ENCODE measurements at regions of chr17 and their contacts with region 1.

Region 1: GRCh38 chr17:44141717-44142285 is at the start of gene HROB:
- DNase-seq: peak; percentile 76 to 98
- H3K4me3 ChIP-seq: peak within 1 kb of the TSS; percentile 50 to 76
- H3K27ac ChIP-seq: no peak within 1 kb of the TSS
- H3K4me1 ChIP-seq: peaks cover 0 to 10% of the 10 kb centered on the region in 2 donors
- H3K27me3 ChIP-seq: no peaks in the 10 kb centered on the region
- CTCF ChIP-seq: peak; percentile 90 to 95 (median 93)
- total RNA-seq, gene HROB: not detected

Region 2: GRCh38 chr17:43907425-43907981 is 234.3 kb before region 1 on chr17 and contains the start of gene MPP2:
- intact Hi-C with region 1: loop called (anchors 1 kb)
- DNase-seq: peak in 1 of 2 donors; percentile 87
- H3K4me3 ChIP-seq: peak within 1 kb of the TSS; percentile 75 to 81
- H3K27ac ChIP-seq: peak within 1 kb of the TSS; percentile 89 to 96
- H3K4me1 ChIP-seq: peaks cover 4 to 11% of the 10 kb centered on the region in 2 donors
- H3K27me3 ChIP-seq: no peaks in the 10 kb centered on the region
- CTCF ChIP-seq: peak in 1 of 3 experiments; percentile 31
- total RNA-seq, gene MPP2: 16.7 TPM

Region 3: GRCh38 chr17:43983515-43984411 is 158.0 kb before region 1 on chr17:
- intact Hi-C with region 1: no loop called
- DNase-seq: no peak
- H3K4me3 ChIP-seq: peak overlapping the region; percentile 50 to 51
- H3K27ac ChIP-seq: no peak overlapping the region
- H3K4me1 ChIP-seq: peaks cover 6 to 7% of the 10 kb centered on the region in 2 donors
- H3K27me3 ChIP-seq: peaks cover 14% of the 10 kb centered on the region
- CTCF ChIP-seq: no peak

Region 4: GRCh38 chr17:44070455-44071197 is 71.2 kb before region 1 on chr17 and contains the start of gene G6PC3:
- intact Hi-C with region 1: loop called (anchors 2 kb)
- DNase-seq: peak; percentile 83 to 98
- H3K4me3 ChIP-seq: peak within 1 kb of the TSS; percentile 66 to 68
- H3K27ac ChIP-seq: peak within 1 kb of the TSS; percentile 84 to 89
- H3K4me1 ChIP-seq: peaks cover 5 to 35% of the 10 kb centered on the region in 2 donors
- H3K27me3 ChIP-seq: no peaks in the 10 kb centered on the region
- CTCF ChIP-seq: peak in 1 of 3 experiments; percentile 14
- total RNA-seq, gene G6PC3: 111 TPM

Region 5: GRCh38 chr17:44110823-44111633 is 30.8 kb before region 1 on chr17:
- intact Hi-C with region 1: loop called (anchors 2 kb)
- DNase-seq: peak; percentile 92 to 99
- H3K4me3 ChIP-seq: peak overlapping the region; percentile 45 to 68
- H3K27ac ChIP-seq: peak overlapping the region; percentile 81 to 95
- H3K4me1 ChIP-seq: peaks cover 32 to 72% of the 10 kb centered on the region in 2 donors
- H3K27me3 ChIP-seq: no peaks in the 10 kb centered on the region
- CTCF ChIP-seq: no peak

Region 6: DNA sequence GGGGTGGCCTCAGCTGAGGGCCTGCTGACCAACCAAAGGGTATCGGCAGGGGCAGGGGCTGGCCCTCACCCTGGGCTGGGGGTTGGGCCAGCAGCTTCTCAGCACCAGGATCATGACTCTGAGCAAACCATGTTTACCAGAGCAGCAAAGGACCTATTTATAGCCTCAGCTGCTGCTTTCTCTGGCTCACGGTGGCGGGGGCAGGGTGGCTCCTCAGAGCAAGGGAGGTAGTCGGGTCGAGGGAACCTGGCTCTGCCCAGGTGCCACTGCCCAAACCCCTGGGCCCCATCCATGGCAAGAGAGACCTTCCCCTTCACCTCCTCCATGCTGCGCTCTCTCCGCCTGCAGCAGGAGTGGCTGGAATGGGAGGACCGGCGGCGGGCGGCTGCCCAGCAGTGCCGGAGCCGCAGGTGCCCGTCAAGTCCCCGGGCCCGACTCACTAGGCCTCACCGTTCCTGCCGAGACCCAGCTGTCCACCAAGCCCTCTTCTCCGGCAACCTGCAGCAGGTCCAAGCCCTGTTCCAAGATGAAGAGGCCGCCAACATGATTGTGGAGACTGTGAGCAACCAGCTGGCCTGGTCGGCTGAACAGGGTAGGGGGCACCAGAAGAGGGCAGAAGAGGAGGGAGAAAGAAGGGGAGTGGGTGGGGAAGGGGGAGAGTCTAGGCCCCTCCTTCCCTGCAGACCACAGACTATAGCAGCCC is 28.8 kb after region 1 on chr17 and contains the start of gene ASB16:
- intact Hi-C with region 1: loop called (anchors 1 kb)
- DNase-seq: no peak
- H3K4me3 ChIP-seq: peak within 1 kb of the TSS; percentile 42 to 62
- H3K27ac ChIP-seq: peak within 1 kb of the TSS; percentile 59 to 87
- H3K4me1 ChIP-seq: peaks cover 4 to 15% of the 10 kb centered on the region in 2 donors
- H3K27me3 ChIP-seq: no peaks in the 10 kb centered on the region
- CTCF ChIP-seq: no peak
- total RNA-seq, gene ASB16: not detected

Region 7: GRCh38 chr17:44722254-44722653 is 580.5 kb after region 1 on chr17:
- intact Hi-C with region 1: no loop called
- DNase-seq: no peak
- H3K4me3 ChIP-seq: no peak overlapping the region
- H3K27ac ChIP-seq: no peak overlapping the region
- H3K4me1 ChIP-seq: no peaks in the 10 kb centered on the region
- H3K27me3 ChIP-seq: no peaks in the 10 kb centered on the region
- CTCF ChIP-seq: no peak

Region 8: DNA sequence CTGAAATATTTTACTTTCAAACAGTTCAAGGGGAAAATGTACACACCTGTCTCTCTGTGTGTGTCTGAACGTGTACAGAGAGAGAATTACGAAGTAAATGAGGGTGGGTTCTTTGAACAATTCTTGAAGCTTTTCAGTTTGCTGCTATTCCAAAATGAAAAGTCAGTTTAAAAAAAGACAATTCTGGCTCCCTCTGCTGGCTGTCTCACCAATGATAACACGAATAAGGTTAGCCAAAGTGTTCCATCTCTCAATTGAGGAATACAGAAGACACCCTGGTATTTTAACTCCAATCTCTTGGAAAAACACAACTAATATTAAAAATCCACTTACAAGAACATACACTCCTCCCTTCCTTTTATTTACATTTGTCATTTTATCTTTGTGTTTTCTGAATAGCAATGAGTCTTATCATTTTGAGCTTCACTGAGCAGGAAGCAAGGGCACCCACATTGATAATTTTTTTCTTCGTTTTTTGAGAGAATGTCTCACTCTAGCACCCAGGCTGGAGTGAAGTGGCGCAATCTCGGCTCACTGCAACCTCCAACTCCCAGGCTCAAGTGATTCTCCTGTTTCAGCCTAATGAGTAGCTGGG is 736.9 kb after region 1 on chr17:
- intact Hi-C with region 1: no loop called
- DNase-seq: no peak
- H3K4me3 ChIP-seq: no peak overlapping the region
- H3K27ac ChIP-seq: no peak overlapping the region
- H3K4me1 ChIP-seq: no peaks in the 10 kb centered on the region
- H3K27me3 ChIP-seq: no peaks in the 10 kb centered on the region
- CTCF ChIP-seq: peak; percentile 21 to 63 (median 29)